Activated B cell treated with CpG ODN at 0.5 μM for 24 hours (primary cell): ENCODE measurements at regions of chr6 and their contacts with region 1.

Region 1: DNA sequence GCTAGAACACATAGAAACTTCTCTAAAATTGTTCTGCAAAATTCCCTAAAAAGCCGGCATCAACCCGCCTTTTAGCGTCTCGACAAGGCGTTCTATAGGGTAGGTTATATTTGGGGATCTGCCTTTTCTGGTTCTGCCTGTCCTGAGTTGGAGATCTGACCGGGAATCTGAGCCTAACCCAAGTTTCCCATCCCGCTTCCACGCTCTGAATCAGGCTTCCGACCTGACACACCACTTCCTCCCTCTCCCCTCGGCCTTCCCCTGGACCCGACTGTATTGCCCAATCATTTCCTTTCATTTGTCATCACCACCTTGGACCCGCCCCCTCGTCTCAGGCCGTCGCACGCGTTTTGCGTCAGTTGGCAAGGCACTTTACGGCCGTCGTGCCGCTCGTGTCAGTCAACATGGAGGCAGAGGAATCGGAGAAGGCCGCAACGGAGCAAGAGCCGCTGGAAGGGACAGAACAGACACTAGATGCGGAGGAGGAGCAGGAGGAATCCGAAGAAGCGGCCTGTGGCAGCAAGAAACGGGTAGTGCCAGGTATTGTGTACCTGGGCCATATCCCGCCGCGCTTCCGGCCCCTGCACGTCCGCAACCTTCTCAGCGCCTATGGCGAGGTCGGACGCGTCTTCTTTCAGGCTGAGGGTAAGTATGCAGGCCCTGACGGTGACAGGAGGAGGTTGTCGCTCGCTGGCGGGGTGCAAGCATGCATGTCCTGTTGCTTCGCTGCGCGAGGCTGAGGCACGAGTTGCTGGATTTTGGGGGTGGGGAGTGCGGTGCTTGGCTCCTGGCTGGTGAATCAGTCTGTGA is at the start of gene ABT1:
- DNase-seq: peak; percentile 91
- ATAC-seq: peak; percentile 90
- H3K4me3 Mint-ChIP-seq: no peak within 1 kb of the TSS
- H3K27ac Mint-ChIP-seq: no peak within 1 kb of the TSS
- H3K4me1 Mint-ChIP-seq: peaks cover 17% of the 10 kb centered on the region
- H3K27me3 Mint-ChIP-seq: peaks cover 5% of the 10 kb centered on the region
- CTCF ChIP-seq: no peak
- total RNA-seq, gene ABT1: 30.7 and 30.8 TPM in 2 replicates

Region 2: GRCh38 chr6:25793970-25794369 is 802.8 kb before region 1 on chr6:
- CTCF ChIA-PET with region 1: no interaction called
- POLR2A ChIA-PET with region 1: no interaction called
- intact Hi-C with region 1: no loop called
- DNase-seq: no peak
- ATAC-seq: no peak
- H3K4me3 Mint-ChIP-seq: no peak overlapping the region
- H3K27ac Mint-ChIP-seq: no peak overlapping the region
- H3K4me1 Mint-ChIP-seq: no peaks in the 10 kb centered on the region
- H3K27me3 Mint-ChIP-seq: peaks cover 5% of the 10 kb centered on the region
- CTCF ChIP-seq: no peak

Region 3: GRCh38 chr6:26065952-26066380 is 530.8 kb before region 1 on chr6:
- CTCF ChIA-PET with region 1: interaction called, 3 read pairs
- POLR2A ChIA-PET with region 1: no interaction called
- intact Hi-C with region 1: loop called (anchors 5 kb)
- DNase-seq: no peak
- ATAC-seq: peak; percentile 97
- H3K4me3 Mint-ChIP-seq: no peak overlapping the region
- H3K27ac Mint-ChIP-seq: peak overlapping the region; percentile 35
- H3K4me1 Mint-ChIP-seq: peaks cover 8% of the 10 kb centered on the region
- H3K27me3 Mint-ChIP-seq: peaks cover 3% of the 10 kb centered on the region
- CTCF ChIP-seq: peak; percentile 39

Region 4: DNA sequence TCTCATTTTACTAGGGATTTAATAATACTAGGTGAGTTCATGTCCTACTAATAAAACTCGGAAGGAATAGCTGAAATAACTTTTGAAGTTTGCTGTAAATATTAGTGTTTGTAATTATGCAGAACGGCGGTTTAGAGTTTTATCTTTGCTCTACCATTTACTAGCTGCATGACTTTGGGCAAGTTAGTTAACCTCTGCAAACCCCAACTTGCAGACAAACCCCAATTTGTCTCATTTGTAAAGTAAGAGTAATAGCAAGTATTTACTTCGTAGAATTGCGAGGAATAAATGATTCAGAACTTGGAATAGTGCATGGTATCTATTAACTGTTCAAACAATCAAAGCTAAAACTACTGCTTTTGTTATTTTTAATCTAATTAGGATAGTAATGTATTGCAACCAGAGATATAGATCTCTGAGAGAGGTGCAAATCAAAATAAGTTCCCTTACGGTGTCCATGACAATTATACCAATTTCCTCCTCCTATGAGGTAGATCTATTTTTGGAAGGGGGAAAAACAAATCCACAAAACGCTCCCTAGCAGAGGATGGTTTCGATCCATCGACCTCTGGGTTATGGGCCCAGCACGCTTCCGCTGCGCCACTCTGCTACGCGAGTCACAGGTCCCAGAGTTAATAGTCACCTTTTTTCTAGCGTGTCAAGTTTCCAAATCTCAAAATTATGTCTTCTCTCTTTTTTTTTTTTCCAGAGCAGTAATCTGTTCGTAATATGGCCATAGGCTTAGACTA is 266.8 kb before region 1 on chr6:
- CTCF ChIA-PET with region 1: interaction called, 16 read pairs
- POLR2A ChIA-PET with region 1: interaction called, 4 read pairs
- intact Hi-C with region 1: no loop called
- DNase-seq: no peak
- ATAC-seq: peak; percentile 18
- H3K4me3 Mint-ChIP-seq: peak overlapping the region; percentile 41
- H3K27ac Mint-ChIP-seq: peak overlapping the region; percentile 65
- H3K4me1 Mint-ChIP-seq: peaks cover 25% of the 10 kb centered on the region
- H3K27me3 Mint-ChIP-seq: peaks cover 42% of the 10 kb centered on the region
- CTCF ChIP-seq: no peak

Region 5: GRCh38 chr6:26342106-26343004 is 254.4 kb before region 1 on chr6:
- CTCF ChIA-PET with region 1: interaction called, 23 read pairs
- POLR2A ChIA-PET with region 1: no interaction called
- intact Hi-C with region 1: loop called (anchors 1 kb)
- DNase-seq: no peak
- ATAC-seq: no peak
- H3K4me3 Mint-ChIP-seq: no peak overlapping the region
- H3K27ac Mint-ChIP-seq: no peak overlapping the region
- H3K4me1 Mint-ChIP-seq: peaks cover 9% of the 10 kb centered on the region
- H3K27me3 Mint-ChIP-seq: peaks cover 40% of the 10 kb centered on the region
- CTCF ChIP-seq: no peak

Region 6: GRCh38 chr6:26576929-26577719 is 19.7 kb before region 1 on chr6:
- CTCF ChIA-PET with region 1: interaction called, 37 read pairs
- POLR2A ChIA-PET with region 1: interaction called, 15 read pairs
- intact Hi-C with region 1: loop called (anchors 1 kb)
- DNase-seq: no peak
- ATAC-seq: peak; percentile 55
- H3K4me3 Mint-ChIP-seq: peak overlapping the region; percentile 73
- H3K27ac Mint-ChIP-seq: peak overlapping the region; percentile 21
- H3K4me1 Mint-ChIP-seq: peaks cover 19% of the 10 kb centered on the region
- H3K27me3 Mint-ChIP-seq: no peaks in the 10 kb centered on the region
- CTCF ChIP-seq: no peak